ENCODE measurements at regions of chr3 and their contacts with region 1.

Region 1: DNA sequence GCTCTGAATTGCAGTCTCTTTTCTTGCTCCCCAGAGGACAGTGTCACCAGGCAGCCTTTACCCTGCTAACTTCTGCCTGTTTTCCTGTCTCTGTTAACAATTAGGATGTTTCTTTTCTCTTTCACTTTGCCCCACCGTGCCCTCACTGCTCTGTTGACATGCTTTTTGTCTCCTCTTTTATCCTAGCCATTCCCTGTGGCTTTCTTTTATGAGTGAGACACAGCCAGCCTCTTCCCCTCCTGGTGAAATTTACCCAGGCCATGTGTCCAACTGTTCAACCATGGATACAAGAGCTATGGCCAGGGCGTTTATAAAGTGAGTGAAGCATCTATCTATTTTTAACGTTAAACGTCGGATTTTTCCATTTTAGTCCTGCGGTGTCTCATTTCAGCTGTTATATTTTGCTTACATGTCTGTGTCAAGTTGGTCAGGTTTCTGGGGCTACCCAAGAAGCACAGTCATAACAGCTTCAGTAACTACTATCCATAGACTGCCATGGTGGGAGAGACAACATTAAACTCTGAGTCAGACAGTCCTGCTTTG is 443.2 kb upstream of the AZI2 start:
- DNase-seq: no peak
- H3K4me3 Mint-ChIP-seq: no peak overlapping the region
- H3K27ac Mint-ChIP-seq: no peak overlapping the region
- H3K4me1 Mint-ChIP-seq: no peaks in the 10 kb centered on the region
- H3K27me3 Mint-ChIP-seq: no peaks in the 10 kb centered on the region
- CTCF ChIP-seq: no peak

Region 2: DNA sequence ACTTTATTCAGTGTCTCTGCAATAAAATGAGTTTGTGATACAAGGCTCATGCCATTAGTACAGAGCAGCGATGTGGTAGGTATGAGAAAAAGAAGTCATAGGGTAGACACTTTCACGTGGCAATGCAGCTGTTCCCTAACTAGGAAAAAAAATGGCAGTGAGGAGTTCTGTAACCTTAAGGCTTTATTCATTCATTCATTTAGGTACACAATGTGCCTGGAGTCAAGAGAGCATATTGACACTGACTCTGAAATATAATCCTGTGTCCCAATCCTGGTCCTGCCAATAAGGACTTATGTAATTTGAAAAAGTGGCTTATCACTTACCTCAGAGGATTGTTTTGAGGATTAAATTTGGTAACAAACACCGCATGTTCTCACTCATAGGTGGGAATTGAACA is 270.1 kb before region 1 on chr3:
- CTCF ChIA-PET with region 1: no interaction called
- intact Hi-C with region 1: loop called (anchors 5 kb)
- DNase-seq: no peak
- H3K4me3 Mint-ChIP-seq: no peak overlapping the region
- H3K27ac Mint-ChIP-seq: no peak overlapping the region
- H3K4me1 Mint-ChIP-seq: no peaks in the 10 kb centered on the region
- H3K27me3 Mint-ChIP-seq: no peaks in the 10 kb centered on the region
- CTCF ChIP-seq: no peak

Measured in Calu3 (cell line).